Mammary epithelial cell (primary cell): ENCODE measurements at regions of chr2 and their contacts with region 1.

Region 1: DNA sequence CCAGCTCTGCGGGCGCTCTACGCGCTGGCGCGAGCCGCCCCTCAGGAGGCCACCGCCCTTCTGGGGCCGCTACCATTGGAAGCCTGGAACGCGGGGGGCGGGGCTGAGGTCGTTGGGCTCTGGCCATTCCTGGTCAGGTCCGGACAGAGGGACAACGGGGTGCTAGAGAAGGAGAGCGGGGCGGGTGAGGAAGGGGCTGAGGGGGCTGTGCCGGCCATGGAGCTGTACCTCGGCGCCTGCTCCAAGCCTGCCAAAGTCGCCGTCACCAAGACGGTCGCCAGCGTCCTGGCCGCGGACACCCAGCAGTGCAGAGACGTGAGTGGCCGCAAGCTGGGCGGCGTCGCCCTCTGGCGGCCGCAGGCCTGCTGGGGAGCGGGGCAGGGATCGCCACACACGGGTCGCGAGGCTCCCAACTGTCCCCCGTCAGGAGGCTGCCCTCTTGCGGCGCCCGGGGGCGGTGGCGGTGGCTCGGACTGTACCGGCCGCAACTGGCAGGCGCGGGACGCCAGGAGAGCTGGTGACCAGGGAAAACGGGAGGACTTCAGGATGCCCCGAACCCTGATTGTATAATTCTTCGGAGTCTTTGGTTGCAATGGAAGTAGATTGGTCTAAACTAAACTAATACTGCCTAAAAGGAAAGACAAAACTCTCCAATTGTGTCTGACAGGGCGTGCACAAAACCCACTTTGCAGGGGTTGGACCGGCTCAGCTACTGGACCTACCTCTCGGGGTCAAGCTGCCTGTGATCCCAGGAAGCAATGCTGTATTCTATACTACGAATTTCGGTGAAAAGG is at the start of gene FSIP2:
- DNase-seq: peak; percentile 74
- H3K4me3 ChIP-seq: peak within 1 kb of the TSS; percentile 56 to 89 (median 63)
- H3K27ac ChIP-seq: no peak within 1 kb of the TSS
- H3K4me1 ChIP-seq: no peaks in the 10 kb centered on the region
- H3K27me3 ChIP-seq: no peaks in the 10 kb centered on the region
- CTCF ChIP-seq: peak; percentile 83 to 100
- total RNA-seq, gene FSIP2: 1.1 to 5.3 TPM

Region 2: GRCh38 chr2:185291035-185291647 is 447.7 kb before region 1 on chr2:
- CTCF ChIA-PET with region 1: interaction called, 6 read pairs
- dilution Hi-C with region 1: no loop called
- in situ Hi-C with region 1: loop called (anchors 10 to 25 kb)
- intact Hi-C with region 1: loop called (anchors 1 kb)
- DNase-seq: peak; percentile 53
- H3K4me3 ChIP-seq: no peak overlapping the region
- H3K27ac ChIP-seq: no peak overlapping the region
- H3K4me1 ChIP-seq: no peaks in the 10 kb centered on the region
- H3K27me3 ChIP-seq: no peaks in the 10 kb centered on the region
- CTCF ChIP-seq: peak; percentile 74 to 90

Region 3: DNA sequence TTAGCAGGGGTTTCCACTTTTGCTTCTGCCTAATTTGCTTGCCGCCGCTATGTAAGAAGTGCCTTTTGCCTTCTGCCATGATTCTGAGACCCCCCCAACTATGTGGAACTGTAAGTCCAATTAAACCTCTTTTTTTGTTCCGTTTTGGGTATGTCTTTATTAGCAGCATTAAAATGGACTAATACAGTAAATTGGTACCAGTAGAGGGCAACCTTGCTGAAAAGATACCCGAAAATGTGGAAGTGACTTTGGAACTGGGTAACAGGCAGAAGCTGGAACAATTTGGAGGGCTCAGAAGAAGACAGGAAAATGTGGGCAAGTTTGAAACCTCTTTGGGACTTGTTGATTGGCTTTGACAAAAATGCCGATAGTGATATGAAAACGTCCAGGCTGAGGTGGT is 216.4 kb before region 1 on chr2:
- CTCF ChIA-PET with region 1: no interaction called
- dilution Hi-C with region 1: no loop called
- in situ Hi-C with region 1: no loop called
- intact Hi-C with region 1: loop called (anchors 1 kb)
- DNase-seq: no peak
- H3K4me3 ChIP-seq: no peak overlapping the region
- H3K27ac ChIP-seq: no peak overlapping the region
- H3K4me1 ChIP-seq: no peaks in the 10 kb centered on the region
- H3K27me3 ChIP-seq: no peaks in the 10 kb centered on the region
- CTCF ChIP-seq: no peak

Region 4: DNA sequence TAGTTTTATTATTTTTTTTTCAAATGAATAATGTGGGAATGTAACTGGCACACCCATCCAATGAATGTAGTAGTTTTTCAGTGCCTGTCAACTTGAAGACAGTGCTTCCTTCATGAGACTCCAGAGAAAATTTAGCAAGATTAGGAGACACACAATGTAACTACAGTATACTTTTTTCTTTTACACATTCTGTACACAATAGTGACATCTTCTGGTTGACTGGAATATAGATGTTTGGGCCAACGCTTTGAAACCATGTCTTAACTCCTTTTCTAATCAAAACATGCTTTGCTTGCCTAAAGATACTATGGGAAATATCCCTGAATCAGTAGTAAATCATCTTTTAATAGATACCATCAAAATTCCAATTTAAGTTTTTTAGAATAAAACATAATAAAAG is 517.7 kb after region 1 on chr2:
- CTCF ChIA-PET with region 1: no interaction called
- dilution Hi-C with region 1: no loop called
- in situ Hi-C with region 1: no loop called
- intact Hi-C with region 1: loop called (anchors 1 kb)
- DNase-seq: peak; percentile 43
- H3K4me3 ChIP-seq: no peak overlapping the region
- H3K27ac ChIP-seq: no peak overlapping the region
- H3K4me1 ChIP-seq: no peaks in the 10 kb centered on the region
- H3K27me3 ChIP-seq: no peaks in the 10 kb centered on the region
- CTCF ChIP-seq: peak; percentile 41 to 63

Region 5: DNA sequence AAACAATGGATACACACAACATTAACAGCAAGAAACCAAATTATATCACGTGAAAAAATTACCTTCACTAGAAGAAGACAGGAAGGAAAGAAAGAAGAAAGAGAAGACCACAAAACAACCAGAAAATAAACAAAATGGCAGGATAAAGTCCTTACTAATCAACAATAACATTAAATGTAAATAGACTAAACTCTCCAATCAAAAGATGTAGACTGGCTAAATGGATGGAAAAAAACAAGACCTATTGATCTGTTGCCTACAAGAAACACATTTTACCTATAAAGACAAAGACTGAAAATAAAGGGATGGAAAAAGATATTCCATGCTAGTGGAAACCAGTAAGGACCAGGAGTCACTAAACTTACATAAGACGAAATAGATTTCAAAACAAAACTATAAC is 580.2 kb after region 1 on chr2:
- CTCF ChIA-PET with region 1: no interaction called
- dilution Hi-C with region 1: no loop called
- in situ Hi-C with region 1: no loop called
- intact Hi-C with region 1: no loop called
- DNase-seq: no peak
- H3K4me3 ChIP-seq: no peak overlapping the region
- H3K27ac ChIP-seq: no peak overlapping the region
- H3K4me1 ChIP-seq: no peaks in the 10 kb centered on the region
- H3K27me3 ChIP-seq: no peaks in the 10 kb centered on the region
- CTCF ChIP-seq: no peak

Region 6: GRCh38 chr2:186641807-186642321 is 903.0 kb after region 1 on chr2:
- CTCF ChIA-PET with region 1: no interaction called
- dilution Hi-C with region 1: no loop called
- in situ Hi-C with region 1: no loop called
- intact Hi-C with region 1: loop called (anchors 5 kb)
- DNase-seq: peak; percentile 74
- H3K4me3 ChIP-seq: no peak overlapping the region
- H3K27ac ChIP-seq: no peak overlapping the region
- H3K4me1 ChIP-seq: no peaks in the 10 kb centered on the region
- H3K27me3 ChIP-seq: no peaks in the 10 kb centered on the region
- CTCF ChIP-seq: peak; percentile 75 to 87